Activated CD8-positive, alpha-beta T cell treated with anti-CD3 and anti-CD28 coated beads for 36 hours (primary cell): ENCODE measurements at regions of chr7 and their contacts with region 1.

Region 1: DNA sequence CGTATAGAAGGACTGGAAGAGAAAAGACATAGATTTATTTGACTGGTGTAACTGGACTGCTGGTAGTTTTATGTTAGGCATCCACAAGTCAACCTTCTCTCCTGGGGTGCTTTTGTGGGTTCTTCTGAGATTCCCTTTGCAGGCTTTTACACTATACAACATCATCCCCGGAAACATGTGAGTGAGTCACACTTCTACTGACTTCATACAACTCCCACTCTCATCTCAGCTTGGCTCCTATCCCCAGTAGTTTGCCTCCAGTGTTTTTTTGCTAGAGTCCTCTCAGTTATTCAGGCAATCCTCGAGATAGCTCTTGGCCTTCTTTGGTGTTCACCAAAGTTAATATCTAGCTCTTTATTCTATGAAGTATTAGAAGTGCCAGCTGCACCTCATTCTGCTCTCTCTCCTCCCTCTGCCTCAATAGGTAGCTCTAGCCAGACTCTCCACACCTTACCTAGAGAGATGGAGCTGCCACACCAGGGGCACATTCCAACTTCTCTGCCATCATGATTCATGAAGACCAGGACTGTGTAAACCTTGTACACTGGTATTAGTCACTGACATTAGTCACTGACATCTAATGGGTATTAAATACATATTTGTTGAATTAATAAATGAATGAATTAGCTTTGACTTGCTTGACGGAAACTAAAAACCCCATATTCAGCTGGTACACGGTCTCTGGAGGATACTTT is 281.9 kb downstream of the PPP1R3A start:
- DNase-seq: no peak
- ATAC-seq: no peak
- H3K4me3 Mint-ChIP-seq: no peak overlapping the region
- H3K27ac Mint-ChIP-seq: no peak overlapping the region
- H3K4me1 Mint-ChIP-seq: no peaks in the 10 kb centered on the region
- H3K27me3 Mint-ChIP-seq: no peaks in the 10 kb centered on the region
- CTCF ChIP-seq: no peak

Region 2: DNA sequence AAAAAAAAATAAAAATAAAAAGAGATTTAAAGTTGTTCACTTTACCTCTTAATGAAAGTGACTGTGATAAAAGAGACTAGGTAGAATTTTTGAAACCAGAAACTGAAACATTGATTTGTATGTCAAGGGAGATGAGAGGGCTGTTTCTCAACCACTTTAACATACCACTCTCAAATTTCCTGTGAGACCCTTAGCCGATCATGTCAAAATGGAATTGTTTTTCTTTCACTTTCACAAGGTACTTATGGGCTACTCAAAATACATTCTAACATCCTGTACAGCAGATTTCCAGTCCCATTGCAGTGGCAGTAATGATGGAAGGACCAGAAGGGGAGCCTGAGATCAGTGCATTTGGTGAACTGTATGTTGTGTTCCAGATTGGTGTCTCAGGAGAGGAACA is 20.7 kb after region 1 on chr7:
- CTCF ChIA-PET with region 1: no interaction called
- POLR2A ChIA-PET with region 1: no interaction called
- intact Hi-C with region 1: no loop called
- DNase-seq: no peak
- ATAC-seq: no peak
- H3K4me3 Mint-ChIP-seq: no peak overlapping the region
- H3K27ac Mint-ChIP-seq: no peak overlapping the region
- H3K4me1 Mint-ChIP-seq: no peaks in the 10 kb centered on the region
- H3K27me3 Mint-ChIP-seq: no peaks in the 10 kb centered on the region
- CTCF ChIP-seq: no peak

Region 3: DNA sequence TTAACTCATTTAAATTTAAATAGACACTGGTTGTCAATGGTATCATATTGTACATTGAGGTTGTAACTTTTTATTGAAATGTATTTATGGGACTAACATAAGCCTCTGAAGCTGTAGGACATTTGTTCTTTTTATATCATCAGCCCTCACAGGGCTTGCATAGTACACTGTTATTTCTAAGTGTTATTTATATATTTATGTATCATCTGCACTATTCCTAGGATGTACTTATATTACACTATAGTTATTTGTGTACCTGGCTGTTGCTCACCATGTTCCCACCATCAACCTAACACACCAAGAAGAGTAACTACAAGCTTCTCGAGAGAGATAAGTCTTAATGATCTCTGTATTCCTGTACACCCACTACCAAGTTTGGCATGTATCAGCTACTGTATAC is 57.3 kb after region 1 on chr7:
- CTCF ChIA-PET with region 1: no interaction called
- POLR2A ChIA-PET with region 1: no interaction called
- intact Hi-C with region 1: loop called (anchors 5 kb)
- DNase-seq: no peak
- ATAC-seq: no peak
- H3K4me3 Mint-ChIP-seq: no peak overlapping the region
- H3K27ac Mint-ChIP-seq: no peak overlapping the region
- H3K4me1 Mint-ChIP-seq: no peaks in the 10 kb centered on the region
- H3K27me3 Mint-ChIP-seq: peaks cover 1% of the 10 kb centered on the region
- CTCF ChIP-seq: no peak